CD8-positive, alpha-beta T cell (primary cell): ENCODE measurements at regions of chr17 and their contacts with region 1.

Region 1: DNA sequence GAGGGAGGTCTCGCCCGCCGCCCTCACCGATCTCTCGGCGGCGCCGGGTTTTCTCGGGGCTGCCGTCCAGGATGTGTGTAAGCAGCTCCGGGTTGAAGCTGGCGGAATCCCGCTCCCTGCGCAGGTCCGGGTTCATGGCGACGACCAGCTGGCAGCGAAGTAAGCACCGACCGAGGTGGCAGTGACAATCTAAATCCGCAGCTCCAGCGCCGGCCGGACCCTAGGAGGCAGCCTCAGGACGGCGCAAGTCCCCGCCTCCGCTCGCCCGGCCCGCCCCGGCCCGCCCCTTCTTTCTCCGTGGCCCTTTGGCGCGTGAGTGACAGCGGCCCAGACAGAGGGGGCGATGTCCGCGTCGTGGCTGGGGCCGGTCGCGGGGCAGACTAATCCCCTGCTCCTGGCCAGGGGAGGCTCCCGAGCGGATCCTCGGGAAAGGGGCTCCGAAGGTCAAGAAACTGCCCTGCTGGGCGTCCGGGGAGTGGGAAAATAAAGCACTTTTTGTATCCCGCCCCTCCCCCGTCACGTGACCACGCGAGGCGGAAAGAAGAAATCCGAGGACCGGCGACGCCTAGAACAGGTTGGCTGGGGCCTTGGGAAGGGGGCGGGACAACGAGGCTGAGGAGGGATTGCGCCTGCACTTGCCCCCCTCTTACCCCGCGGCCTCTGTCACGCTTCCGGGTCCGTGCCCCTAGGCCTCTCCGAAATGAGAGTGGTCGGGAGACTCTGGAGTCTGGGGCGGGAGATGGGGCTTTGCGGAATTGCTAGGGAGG is at the starts of genes ACOX1 and TEN1:
- DNase-seq: peak; percentile 90 to 98 (median 96)
- ATAC-seq: peak; percentile 97
- H3K4me3 ChIP-seq: peak within 1 kb of the TSS; percentile 85 to 93
- H3K4me3 Mint-ChIP-seq: peak within 1 kb of the TSS; percentile 99
- H3K27ac ChIP-seq: peak within 1 kb of the TSS; percentile 97 to 99
- H3K27ac Mint-ChIP-seq: peak within 1 kb of the TSS; percentile 100
- H3K4me1 ChIP-seq: peaks cover 15% of the 10 kb centered on the region
- H3K4me1 Mint-ChIP-seq: peaks cover 38% of the 10 kb centered on the region
- H3K27me3 ChIP-seq: no peaks in the 10 kb centered on the region
- H3K27me3 Mint-ChIP-seq: no peaks in the 10 kb centered on the region
- CTCF ChIP-seq: no peak
- total RNA-seq, gene ACOX1: 18.2 to 20.4 TPM
- total RNA-seq, gene TEN1: 14.6 to 17.1 TPM

Region 2: DNA sequence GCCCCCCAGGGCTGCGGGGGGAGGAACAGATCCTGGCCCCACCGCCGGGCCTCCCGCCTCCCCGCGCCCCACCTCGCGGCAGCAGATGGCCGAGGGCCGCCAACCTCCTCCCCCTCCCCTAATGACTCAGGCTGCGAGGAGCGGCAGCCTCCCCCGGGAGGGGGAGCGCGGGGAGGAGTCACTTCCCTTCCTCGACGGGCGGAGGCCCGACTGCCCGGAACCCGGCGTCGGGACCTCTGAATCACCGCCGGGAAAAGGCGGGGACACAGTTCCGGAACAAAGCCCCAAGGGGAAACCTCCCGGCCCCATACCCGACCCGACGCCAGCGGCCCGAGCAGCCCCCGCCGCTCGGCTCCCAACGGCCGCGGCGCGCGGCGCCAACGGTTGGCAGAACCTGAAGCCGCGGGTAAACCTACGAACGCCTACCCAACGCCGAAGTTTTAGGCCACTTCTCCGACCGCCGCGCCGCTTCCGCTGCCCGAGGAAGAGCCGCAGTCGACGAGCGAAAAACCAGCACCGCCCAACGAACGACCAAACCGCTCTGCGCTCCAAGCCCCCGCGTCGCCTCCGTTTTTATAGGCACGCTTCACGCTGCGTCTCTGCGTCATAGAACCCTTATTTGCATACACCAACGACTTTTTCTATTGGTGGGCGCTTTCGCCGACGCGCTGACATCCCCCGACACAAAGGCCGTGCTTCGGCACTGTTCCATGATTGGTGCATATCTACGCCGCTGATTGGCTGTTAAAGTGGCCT is 199.7 kb before region 1 on chr17:
- CTCF ChIA-PET with region 1: no interaction called
- POLR2A ChIA-PET with region 1: interaction called, 3 read pairs
- intact Hi-C with region 1: loop called (anchors 1 kb)
- DNase-seq: peak; percentile 87 to 99 (median 93)
- ATAC-seq: peak; percentile 66
- H3K4me3 ChIP-seq: peak overlapping the region; percentile 87
- H3K4me3 Mint-ChIP-seq: peak overlapping the region; percentile 93
- H3K27ac ChIP-seq: peak overlapping the region; percentile 97
- H3K27ac Mint-ChIP-seq: peak overlapping the region; percentile 98
- H3K4me1 ChIP-seq: peaks cover 44% of the 10 kb centered on the region
- H3K4me1 Mint-ChIP-seq: peaks cover 46% of the 10 kb centered on the region
- H3K27me3 ChIP-seq: no peaks in the 10 kb centered on the region
- H3K27me3 Mint-ChIP-seq: no peaks in the 10 kb centered on the region
- CTCF ChIP-seq: no peak

Region 3: DNA sequence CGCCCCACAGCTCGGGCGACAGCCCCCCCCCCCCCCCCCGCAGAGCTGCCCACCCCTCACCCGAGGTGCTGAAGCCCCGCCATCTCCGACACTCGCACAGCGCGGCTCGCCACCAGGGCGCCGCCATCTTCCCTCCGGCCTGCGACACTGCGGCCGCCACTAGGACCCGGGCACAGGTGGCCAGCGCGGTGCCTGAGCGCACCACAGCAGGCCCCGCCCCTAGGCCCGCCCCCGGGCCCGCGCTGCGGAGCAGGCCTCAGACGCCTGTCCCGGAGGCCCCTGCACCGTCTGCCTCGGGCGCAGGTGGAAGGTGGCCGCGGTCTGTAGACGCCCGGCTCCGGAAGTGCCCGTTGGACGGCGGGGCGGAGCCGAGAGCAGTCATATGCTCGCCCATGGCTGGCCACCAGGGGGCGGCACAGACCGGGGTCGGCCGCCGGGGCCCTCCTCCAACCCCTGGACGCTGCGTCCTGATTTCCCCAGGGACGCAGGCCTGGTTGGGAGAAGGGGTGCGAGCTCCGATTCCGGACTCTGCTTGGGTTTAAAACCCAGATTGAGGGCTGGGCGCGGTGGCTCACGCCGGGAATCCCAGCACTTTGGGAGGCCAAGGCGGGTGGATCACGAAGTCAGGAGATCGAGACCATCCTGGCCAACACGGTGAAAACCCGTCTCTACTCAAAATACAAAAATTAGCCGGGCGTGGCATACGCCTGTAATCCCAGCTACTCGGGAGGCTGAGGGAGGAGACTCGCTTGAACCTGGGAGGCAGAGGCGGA is 74.2 kb before region 1 on chr17 and contains the start of gene MRPL38:
- CTCF ChIA-PET with region 1: interaction called, 3 read pairs
- POLR2A ChIA-PET with region 1: interaction called, 5 read pairs
- intact Hi-C with region 1: loop called (anchors 1 kb)
- DNase-seq: peak; percentile 85 to 98 (median 91)
- ATAC-seq: peak; percentile 96
- H3K4me3 ChIP-seq: peak within 1 kb of the TSS; percentile 77 to 81
- H3K4me3 Mint-ChIP-seq: peak within 1 kb of the TSS; percentile 84
- H3K27ac ChIP-seq: peak within 1 kb of the TSS; percentile 71 to 81
- H3K27ac Mint-ChIP-seq: peak within 1 kb of the TSS; percentile 92
- H3K4me1 ChIP-seq: peaks cover 14% of the 10 kb centered on the region
- H3K4me1 Mint-ChIP-seq: peaks cover 13% of the 10 kb centered on the region
- H3K27me3 ChIP-seq: no peaks in the 10 kb centered on the region
- H3K27me3 Mint-ChIP-seq: no peaks in the 10 kb centered on the region
- CTCF ChIP-seq: peak; percentile 99
- total RNA-seq, gene MRPL38: 171 to 181 TPM

Region 4: DNA sequence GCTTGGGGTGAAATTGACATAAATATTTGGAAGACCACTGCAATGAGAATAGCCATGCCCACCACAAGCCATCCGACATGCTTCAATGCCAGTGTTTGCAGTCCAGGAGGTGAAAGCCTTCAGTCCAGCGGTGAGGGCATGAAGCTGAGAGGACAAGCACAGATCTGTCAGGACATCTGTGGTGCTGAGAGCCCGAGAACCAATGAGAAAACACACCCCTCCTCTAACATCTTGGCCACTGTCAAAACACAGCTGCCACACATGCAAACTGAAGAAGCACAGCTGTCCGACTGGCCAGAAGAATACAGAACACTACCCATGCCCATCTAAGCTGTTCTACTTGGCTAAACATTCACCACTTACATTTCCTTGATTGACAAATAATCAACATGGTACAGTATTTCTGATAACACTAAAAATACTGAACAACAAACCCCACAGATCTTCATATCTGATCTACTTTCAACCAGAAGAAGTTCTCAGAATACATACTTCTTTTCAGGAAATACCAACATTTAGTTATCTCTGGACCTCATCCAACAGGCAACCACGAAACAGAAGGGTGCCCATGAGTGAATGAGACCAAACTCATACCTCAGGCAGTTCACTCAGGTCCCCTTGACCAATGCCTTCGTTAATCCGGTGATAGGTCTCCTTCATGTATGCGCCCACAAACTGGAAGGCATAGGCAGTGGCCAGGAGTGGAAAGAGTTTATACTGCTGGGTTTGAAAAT is 28.1 kb before region 1 on chr17:
- CTCF ChIA-PET with region 1: no interaction called
- POLR2A ChIA-PET with region 1: no interaction called
- intact Hi-C with region 1: no loop called
- DNase-seq: no peak
- ATAC-seq: no peak
- H3K4me3 ChIP-seq: no peak overlapping the region
- H3K4me3 Mint-ChIP-seq: no peak overlapping the region
- H3K27ac ChIP-seq: no peak overlapping the region
- H3K27ac Mint-ChIP-seq: no peak overlapping the region
- H3K4me1 ChIP-seq: no peaks in the 10 kb centered on the region
- H3K4me1 Mint-ChIP-seq: no peaks in the 10 kb centered on the region
- H3K27me3 ChIP-seq: no peaks in the 10 kb centered on the region
- H3K27me3 Mint-ChIP-seq: no peaks in the 10 kb centered on the region
- CTCF ChIP-seq: no peak

Region 5: GRCh38 chr17:76000016-76000754 is 21.1 kb after region 1 on chr17:
- CTCF ChIA-PET with region 1: interaction called, 7 read pairs
- POLR2A ChIA-PET with region 1: no interaction called
- intact Hi-C with region 1: loop called in 1 of 2 experiments (anchors 1 kb)
- DNase-seq: peak; percentile 41 to 76 (median 59)
- ATAC-seq: peak; percentile 90
- H3K4me3 ChIP-seq: no peak overlapping the region
- H3K4me3 Mint-ChIP-seq: no peak overlapping the region
- H3K27ac ChIP-seq: no peak overlapping the region
- H3K27ac Mint-ChIP-seq: no peak overlapping the region
- H3K4me1 ChIP-seq: peaks cover 13% of the 10 kb centered on the region
- H3K4me1 Mint-ChIP-seq: peaks cover 11% of the 10 kb centered on the region
- H3K27me3 ChIP-seq: no peaks in the 10 kb centered on the region
- H3K27me3 Mint-ChIP-seq: no peaks in the 10 kb centered on the region
- CTCF ChIP-seq: peak; percentile 81

Region 6: GRCh38 chr17:76353599-76354316 is 374.6 kb after region 1 on chr17 and contains the start of gene PRPSAP1:
- CTCF ChIA-PET with region 1: no interaction called
- POLR2A ChIA-PET with region 1: interaction called, 4 read pairs
- intact Hi-C with region 1: loop called (anchors 1 kb)
- DNase-seq: peak; percentile 61 to 91 (median 83)
- ATAC-seq: peak; percentile 94
- H3K4me3 ChIP-seq: peak within 1 kb of the TSS; percentile 69 to 82
- H3K4me3 Mint-ChIP-seq: peak within 1 kb of the TSS; percentile 95
- H3K27ac ChIP-seq: peak within 1 kb of the TSS; percentile 53 to 95
- H3K27ac Mint-ChIP-seq: peak within 1 kb of the TSS; percentile 98
- H3K4me1 ChIP-seq: peaks cover 4% of the 10 kb centered on the region
- H3K4me1 Mint-ChIP-seq: peaks cover 24% of the 10 kb centered on the region
- H3K27me3 ChIP-seq: no peaks in the 10 kb centered on the region
- H3K27me3 Mint-ChIP-seq: no peaks in the 10 kb centered on the region
- CTCF ChIP-seq: peak; percentile 47
- total RNA-seq, gene PRPSAP1: 10.5 to 12.5 TPM